ENCODE measurements at regions of chr13 and their contacts with region 1.

Region 1: DNA sequence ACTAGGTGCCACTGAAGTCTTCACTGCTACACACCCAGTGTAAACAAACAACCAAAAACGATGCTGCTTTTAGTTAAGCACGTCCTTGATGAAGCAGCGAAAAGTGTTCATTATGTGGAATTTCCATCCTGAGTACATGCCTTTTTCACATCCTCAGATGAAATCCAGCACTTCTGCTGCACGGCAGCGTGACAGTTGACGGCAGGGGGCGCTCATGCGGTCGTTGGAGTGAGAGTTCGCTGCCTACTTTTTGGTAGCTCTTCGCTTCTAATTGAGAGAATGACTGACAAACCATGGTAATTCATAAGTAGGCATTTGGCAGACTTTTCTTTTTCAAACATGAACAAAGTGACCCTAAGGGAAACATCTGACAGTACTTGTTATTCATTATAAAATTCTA is 1124.9 kb downstream of the EFNB2 start:
- DNase-seq: peak; percentile 18
- H3K4me3 Mint-ChIP-seq: no peak overlapping the region
- H3K27ac Mint-ChIP-seq: no peak overlapping the region
- H3K4me1 Mint-ChIP-seq: no peaks in the 10 kb centered on the region
- H3K27me3 Mint-ChIP-seq: no peaks in the 10 kb centered on the region
- CTCF ChIP-seq: peak; percentile 31

Region 2: DNA sequence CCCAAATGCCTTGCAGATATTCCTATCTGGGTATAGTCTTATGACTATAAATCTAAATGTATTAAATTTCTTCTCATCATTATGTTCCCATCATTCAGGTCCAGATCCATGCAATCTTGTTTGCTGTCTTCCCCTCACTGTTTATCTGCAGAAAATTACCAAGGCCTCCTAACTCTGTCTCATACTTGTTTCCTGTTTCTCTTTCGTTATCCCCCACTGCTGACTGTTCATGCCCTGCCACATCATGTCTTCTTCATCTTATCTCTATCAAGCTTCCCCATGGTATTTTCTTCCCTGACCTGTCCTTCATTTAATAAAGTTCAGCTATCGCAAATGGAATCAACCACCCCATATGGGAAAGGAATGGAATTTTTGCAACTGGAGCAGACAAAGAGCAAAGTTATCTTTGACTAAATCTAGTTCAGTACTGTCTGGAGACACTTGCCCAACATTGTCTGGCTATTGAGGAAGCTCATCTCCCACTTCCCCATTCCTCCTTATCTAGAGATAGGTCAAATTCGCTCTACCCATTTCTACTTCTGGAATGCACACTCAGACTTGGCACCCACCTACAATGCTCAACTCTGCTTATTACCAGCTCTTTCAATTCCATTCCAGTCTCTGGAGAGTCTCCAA is 233.2 kb before region 1 on chr13:
- CTCF ChIA-PET with region 1: no interaction called
- POLR2A ChIA-PET with region 1: no interaction called
- intact Hi-C with region 1: no loop called
- DNase-seq: peak; percentile 5
- H3K4me3 Mint-ChIP-seq: no peak overlapping the region
- H3K27ac Mint-ChIP-seq: no peak overlapping the region
- H3K4me1 Mint-ChIP-seq: no peaks in the 10 kb centered on the region
- H3K27me3 Mint-ChIP-seq: no peaks in the 10 kb centered on the region
- CTCF ChIP-seq: no peak

Region 3: GRCh38 chr13:105395041-105395440 is 15.6 kb before region 1 on chr13:
- CTCF ChIA-PET with region 1: no interaction called
- POLR2A ChIA-PET with region 1: no interaction called
- intact Hi-C with region 1: loop called (anchors 2 kb)
- DNase-seq: no peak
- H3K4me3 Mint-ChIP-seq: no peak overlapping the region
- H3K27ac Mint-ChIP-seq: no peak overlapping the region
- H3K4me1 Mint-ChIP-seq: no peaks in the 10 kb centered on the region
- H3K27me3 Mint-ChIP-seq: no peaks in the 10 kb centered on the region
- CTCF ChIP-seq: no peak

Region 4: GRCh38 chr13:106343836-106344235 is 933.2 kb after region 1 on chr13:
- CTCF ChIA-PET with region 1: no interaction called
- POLR2A ChIA-PET with region 1: no interaction called
- intact Hi-C with region 1: no loop called
- DNase-seq: no peak
- H3K4me3 Mint-ChIP-seq: no peak overlapping the region
- H3K27ac Mint-ChIP-seq: no peak overlapping the region
- H3K4me1 Mint-ChIP-seq: peaks cover 12% of the 10 kb centered on the region
- H3K27me3 Mint-ChIP-seq: no peaks in the 10 kb centered on the region
- CTCF ChIP-seq: no peak

Region 5: GRCh38 chr13:106772006-106772601 is 1361.5 kb after region 1 on chr13:
- CTCF ChIA-PET with region 1: no interaction called
- POLR2A ChIA-PET with region 1: no interaction called
- intact Hi-C with region 1: loop called (anchors 5 kb)
- DNase-seq: no peak
- H3K4me3 Mint-ChIP-seq: no peak overlapping the region
- H3K27ac Mint-ChIP-seq: no peak overlapping the region
- H3K4me1 Mint-ChIP-seq: no peaks in the 10 kb centered on the region
- H3K27me3 Mint-ChIP-seq: no peaks in the 10 kb centered on the region
- CTCF ChIP-seq: no peak